Activated CD8-positive, alpha-beta memory T cell treated with anti-CD3 and anti-CD28 coated beads, Interleukin-2, amount 10 ng/mL, durations not matched to agents 7 days and 5 days (primary cell): ENCODE measurements at regions of chr6 and their contacts with region 1.

Region 1: DNA sequence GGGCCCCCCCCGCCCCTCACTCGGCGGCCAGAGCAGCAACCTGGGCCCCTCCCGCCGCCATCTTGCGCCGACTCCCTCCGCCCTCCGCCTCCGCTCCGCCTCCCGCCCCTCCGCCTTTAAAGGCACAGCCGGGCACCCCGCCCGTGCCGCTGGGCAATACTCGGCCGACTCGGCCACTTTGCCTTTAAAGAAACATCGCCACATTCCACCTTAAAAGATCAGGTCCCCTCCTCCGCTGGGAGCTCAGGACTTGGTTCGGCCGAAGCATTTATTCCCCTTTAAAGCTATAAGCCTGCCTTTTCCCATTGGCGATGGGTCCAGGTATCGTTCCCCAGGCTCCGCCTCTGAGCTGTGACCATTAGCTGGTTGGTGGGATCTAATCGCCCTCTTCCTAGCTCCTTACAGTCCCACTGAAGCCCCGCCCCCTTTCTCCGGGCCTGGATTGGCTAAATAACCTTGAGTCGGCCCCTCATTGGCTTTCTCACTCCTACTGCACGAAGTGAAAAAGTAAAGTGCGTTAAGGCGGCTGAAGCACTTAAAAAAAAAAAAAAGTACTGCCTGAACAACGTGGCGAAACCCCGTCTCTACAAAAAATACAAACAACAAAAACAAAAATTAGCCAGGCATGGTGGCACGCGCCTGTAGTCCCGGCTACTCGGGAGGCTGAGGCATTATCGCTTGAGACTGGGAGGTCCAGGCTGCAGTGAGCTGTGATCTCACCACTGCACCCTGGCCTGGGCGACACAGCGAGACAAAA is at the start of gene ZBTB22:
- DNase-seq: peak; percentile 98
- ATAC-seq: peak; percentile 71
- H3K4me3 Mint-ChIP-seq: peak within 1 kb of the TSS; percentile 90
- H3K27ac Mint-ChIP-seq: peak within 1 kb of the TSS; percentile 91
- H3K4me1 Mint-ChIP-seq: peaks cover 72% of the 10 kb centered on the region
- H3K27me3 Mint-ChIP-seq: no peaks in the 10 kb centered on the region
- total RNA-seq, gene ZBTB22: 10.6 to 11.8 TPM

Region 2: GRCh38 chr6:33014841-33015634 is 302.8 kb before region 1 on chr6:
- CTCF ChIA-PET with region 1: no interaction called
- DNase-seq: peak; percentile 70
- ATAC-seq: peak; percentile 77
- H3K4me3 Mint-ChIP-seq: no peak overlapping the region
- H3K27ac Mint-ChIP-seq: no peak overlapping the region
- H3K4me1 Mint-ChIP-seq: peaks cover 26% of the 10 kb centered on the region
- H3K27me3 Mint-ChIP-seq: peaks cover 32% of the 10 kb centered on the region

Region 3: DNA sequence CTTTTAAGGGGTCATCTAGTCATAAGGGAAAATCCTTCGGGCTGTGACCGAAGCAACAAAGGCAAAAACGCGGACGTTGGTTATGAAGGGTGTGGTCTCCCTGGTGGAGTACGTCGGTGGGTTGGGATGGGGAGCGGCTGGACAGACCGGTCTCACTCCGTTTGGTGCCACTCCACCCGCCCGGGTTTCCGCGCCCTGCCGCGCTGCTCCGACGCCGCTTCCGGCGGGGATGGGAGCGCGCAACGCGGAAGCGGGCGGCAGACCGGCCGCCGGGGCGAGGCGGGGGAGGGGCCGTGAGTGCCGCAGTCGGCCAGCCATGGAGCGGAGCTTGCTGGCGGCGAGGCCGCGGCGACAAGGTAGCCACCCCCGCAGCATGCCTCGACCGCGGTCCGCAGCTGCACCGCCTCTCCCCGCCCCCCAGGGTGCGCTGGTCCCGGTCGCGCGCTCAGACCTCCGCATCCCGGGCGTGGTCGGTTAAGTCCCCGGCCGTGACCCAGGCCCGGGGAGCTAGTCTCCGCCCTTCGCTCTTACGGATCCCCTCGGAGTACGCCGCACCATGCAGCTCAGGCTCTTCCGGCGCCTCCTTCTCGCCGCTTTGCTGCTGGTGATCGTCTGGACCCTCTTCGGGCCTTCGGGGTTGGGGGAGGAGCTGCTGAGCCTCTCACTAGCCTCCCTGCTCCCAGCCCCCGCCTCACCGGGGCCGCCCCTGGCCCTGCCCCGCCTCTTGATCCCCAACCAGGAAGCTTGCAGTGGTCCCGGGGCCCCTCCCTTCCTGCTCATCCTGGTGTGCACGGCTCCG is 40.8 kb before region 1 on chr6 and contains the start of gene B3GALT4:
- CTCF ChIA-PET with region 1: interaction called, 12 read pairs
- DNase-seq: peak; percentile 88
- ATAC-seq: peak; percentile 72
- H3K4me3 Mint-ChIP-seq: peak within 1 kb of the TSS; percentile 88
- H3K27ac Mint-ChIP-seq: peak within 1 kb of the TSS; percentile 97
- H3K4me1 Mint-ChIP-seq: peaks cover 60% of the 10 kb centered on the region
- H3K27me3 Mint-ChIP-seq: no peaks in the 10 kb centered on the region
- total RNA-seq, gene B3GALT4: 14.0 to 20.5 TPM